ENCODE measurements at regions of chr4 and their contacts with region 1.

Region 1: DNA sequence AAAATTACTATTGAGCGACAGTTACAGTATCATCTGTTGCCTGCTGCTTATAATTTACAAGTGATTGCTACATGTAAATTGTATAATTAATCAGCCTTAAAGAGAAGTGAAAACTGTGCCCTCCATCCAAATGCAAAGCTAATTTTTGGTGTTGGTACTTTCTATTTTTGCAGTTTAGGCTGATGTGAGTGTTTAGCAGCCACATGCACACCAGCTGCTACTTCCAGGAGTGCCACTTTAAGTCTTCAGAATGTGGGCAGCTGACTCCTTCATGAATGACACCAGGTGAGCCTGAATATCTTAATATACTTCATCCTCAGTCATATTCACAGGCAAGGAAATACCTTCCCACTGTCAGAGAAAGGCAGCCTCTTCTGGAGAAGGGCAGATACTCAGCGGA is 149.8 kb upstream of the RASGEF1B start:
- DNase-seq: no peak
- H3K4me3 Mint-ChIP-seq: no peak overlapping the region
- H3K27ac Mint-ChIP-seq: no peak overlapping the region
- H3K4me1 Mint-ChIP-seq: peaks cover 11% of the 10 kb centered on the region
- H3K27me3 Mint-ChIP-seq: no peaks in the 10 kb centered on the region
- CTCF ChIP-seq: no peak

Region 2: GRCh38 chr4:81214881-81215868 is 406.3 kb before region 1 on chr4 and contains the start of gene PRKG2:
- CTCF ChIA-PET with region 1: no interaction called
- POLR2A ChIA-PET with region 1: no interaction called
- intact Hi-C with region 1: no loop called
- DNase-seq: no peak
- H3K4me3 Mint-ChIP-seq: peak within 1 kb of the TSS; percentile 69
- H3K27ac Mint-ChIP-seq: no peak within 1 kb of the TSS
- H3K4me1 Mint-ChIP-seq: no peaks in the 10 kb centered on the region
- H3K27me3 Mint-ChIP-seq: no peaks in the 10 kb centered on the region
- CTCF ChIP-seq: no peak
- total RNA-seq, gene PRKG2: 0.23 TPM in 1 of 2 replicates, not detected in the other

Region 3: GRCh38 chr4:81592701-81593100 is 28.8 kb before region 1 on chr4:
- CTCF ChIA-PET with region 1: no interaction called
- POLR2A ChIA-PET with region 1: no interaction called
- intact Hi-C with region 1: no loop called
- DNase-seq: no peak
- H3K4me3 Mint-ChIP-seq: no peak overlapping the region
- H3K27ac Mint-ChIP-seq: no peak overlapping the region
- H3K4me1 Mint-ChIP-seq: no peaks in the 10 kb centered on the region
- H3K27me3 Mint-ChIP-seq: no peaks in the 10 kb centered on the region
- CTCF ChIP-seq: no peak

Region 4: DNA sequence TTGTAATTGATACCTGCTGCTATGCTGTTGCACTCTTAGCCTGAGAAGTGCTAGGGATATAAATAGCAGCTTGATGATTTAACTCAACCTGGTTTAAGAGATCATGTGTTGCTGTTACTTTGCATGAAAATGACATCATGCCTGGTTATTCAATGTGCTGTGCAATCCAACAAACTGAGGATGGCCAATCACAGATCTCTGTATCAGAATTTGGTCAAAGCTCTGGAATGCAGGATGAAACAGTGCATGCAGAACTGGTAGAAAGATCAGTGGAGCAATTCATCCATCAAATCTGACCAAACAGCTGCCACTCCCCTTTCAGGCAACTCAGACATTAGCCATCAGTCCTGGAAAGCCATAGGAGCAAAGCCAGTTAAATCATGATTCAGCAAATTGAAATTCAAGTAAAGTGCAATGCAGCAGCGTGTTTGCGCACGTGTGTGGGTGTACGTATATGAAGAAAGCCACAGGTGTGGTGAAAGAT is 10.5 kb after region 1 on chr4:
- CTCF ChIA-PET with region 1: interaction called, 6 read pairs
- POLR2A ChIA-PET with region 1: interaction called, 62 read pairs
- intact Hi-C with region 1: loop called (anchors 1 kb)
- DNase-seq: peak; percentile 93
- H3K4me3 Mint-ChIP-seq: peak overlapping the region; percentile 14
- H3K27ac Mint-ChIP-seq: peak overlapping the region; percentile 91
- H3K4me1 Mint-ChIP-seq: peaks cover 20% of the 10 kb centered on the region
- H3K27me3 Mint-ChIP-seq: no peaks in the 10 kb centered on the region
- CTCF ChIP-seq: no peak